ENCODE measurements at regions of chr11 and their contacts with region 1.

Region 1: GRCh38 chr11:76248210-76248609 is 41.9 kb upstream of the WNT11 start:
- DNase-seq: peak in 1 of 2 experiments; percentile 59
- H3K4me3 ChIP-seq: no peak overlapping the region
- H3K27ac ChIP-seq: no peak overlapping the region
- H3K4me1 ChIP-seq: peaks cover 0 to 9% (median 7%) of the 10 kb centered on the region in 4 experiments; a peak in 6 of 7 replicates
- H3K27me3 ChIP-seq: peaks cover 2 to 8% (median 6%) of the 10 kb centered on the region in 4 experiments; a peak in 6 of 7 replicates
- CTCF ChIP-seq: peak; percentile 54 to 74 (median 72)
- EP300 ChIP-seq: no peak
- POLR2A ChIP-seq: no peak
- RAD21 ChIP-seq: peak; percentile 35 to 57; a peak in 3 of 4 replicates

Region 2: GRCh38 chr11:76230392-76230791 is 17.8 kb before region 1 on chr11:
- CTCF ChIA-PET with region 1: interaction called, 11 read pairs
- POLR2A ChIA-PET with region 1: interaction called, 38 read pairs
- DNase-seq: no peak
- H3K4me3 ChIP-seq: no peak overlapping the region
- H3K27ac ChIP-seq: no peak overlapping the region
- H3K4me1 ChIP-seq: peaks cover 0 to 8% (median 4%) of the 10 kb centered on the region in 4 experiments; a peak in 4 of 7 replicates
- H3K27me3 ChIP-seq: no peaks in the 10 kb centered on the region; a peak in 2 of 7 replicates
- CTCF ChIP-seq: no peak
- EP300 ChIP-seq: no peak
- POLR2A ChIP-seq: no peak
- RAD21 ChIP-seq: no peak

Region 3: DNA sequence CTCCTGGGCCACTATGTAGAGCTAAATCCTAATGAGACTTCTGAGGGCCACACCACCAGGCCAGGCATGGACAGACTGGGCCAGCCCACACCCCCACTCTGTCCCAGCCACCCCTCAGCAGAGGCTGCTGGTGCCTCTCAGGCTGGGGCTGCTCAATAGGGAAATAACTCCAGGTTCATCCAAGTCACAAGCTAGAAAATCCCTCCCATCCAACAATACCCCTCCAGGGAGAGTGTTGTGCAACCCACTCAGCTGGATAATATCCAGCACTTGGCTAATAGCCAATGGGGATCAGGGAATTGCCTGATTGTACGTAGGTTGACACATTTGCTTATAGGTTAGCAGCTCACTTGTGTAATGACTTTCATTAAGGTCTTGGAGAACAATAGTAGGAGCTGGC is 22.2 kb after region 1 on chr11:
- CTCF ChIA-PET with region 1: interaction called, 18 read pairs
- POLR2A ChIA-PET with region 1: interaction called, 3 read pairs
- DNase-seq: no peak
- H3K4me3 ChIP-seq: no peak overlapping the region
- H3K27ac ChIP-seq: no peak overlapping the region
- H3K4me1 ChIP-seq: no peaks in the 10 kb centered on the region
- H3K27me3 ChIP-seq: no peaks in the 10 kb centered on the region; a peak in 1 of 7 replicates
- CTCF ChIP-seq: no peak
- EP300 ChIP-seq: no peak
- POLR2A ChIP-seq: no peak
- RAD21 ChIP-seq: no peak

Region 4: GRCh38 chr11:76293189-76293631 is 45.0 kb after region 1 on chr11:
- CTCF ChIA-PET with region 1: interaction called, 12 read pairs
- POLR2A ChIA-PET with region 1: no interaction called
- DNase-seq: no peak
- H3K4me3 ChIP-seq: no peak overlapping the region
- H3K27ac ChIP-seq: no peak overlapping the region
- H3K4me1 ChIP-seq: no peaks in the 10 kb centered on the region
- H3K27me3 ChIP-seq: no peaks in the 10 kb centered on the region; a peak in 1 of 7 replicates
- CTCF ChIP-seq: no peak
- EP300 ChIP-seq: no peak
- POLR2A ChIP-seq: no peak
- RAD21 ChIP-seq: no peak